ENCODE measurements at regions of chr12 and their contacts with region 1.

Region 1: DNA sequence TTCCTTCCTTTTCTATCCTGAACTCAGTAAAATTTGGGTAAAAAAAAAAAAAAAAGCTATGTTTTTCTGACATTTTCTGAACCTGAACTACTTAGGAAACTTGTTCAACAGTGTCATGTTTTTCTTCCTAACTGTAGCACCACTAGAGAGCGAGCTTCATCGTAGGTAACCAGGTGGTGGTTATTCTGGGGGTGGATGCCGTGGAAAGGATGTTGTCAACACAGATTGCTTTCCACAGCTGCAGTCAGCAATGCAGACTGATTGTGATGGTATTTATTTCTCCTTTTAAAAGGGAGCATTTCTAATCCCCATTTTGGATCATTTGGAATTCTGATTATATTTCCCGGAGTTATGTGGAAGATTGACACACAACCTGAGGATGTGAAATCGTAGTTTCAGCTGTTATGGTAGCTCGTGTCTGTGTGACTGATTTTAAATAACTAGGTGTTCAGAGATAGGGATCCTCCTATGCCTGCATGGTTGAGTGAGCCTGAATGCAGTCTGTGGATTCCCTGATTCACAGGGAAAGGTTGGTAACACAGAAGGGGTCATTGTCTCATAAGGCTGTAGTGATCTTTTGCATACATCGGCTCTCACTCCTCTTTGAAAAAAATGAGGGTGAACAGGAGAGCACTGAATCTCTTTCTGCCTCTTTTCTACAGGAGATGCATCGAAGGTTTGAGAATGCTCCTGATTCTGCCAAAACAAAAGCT is 113.2 kb downstream of the ERC1 start:
- DNase-seq: no peak
- H3K4me3 ChIP-seq: no peak overlapping the region
- H3K27ac ChIP-seq: no peak overlapping the region
- H3K4me1 ChIP-seq: no peaks in the 10 kb centered on the region
- H3K27me3 ChIP-seq: no peaks in the 10 kb centered on the region
- CTCF ChIP-seq: no peak

Region 2: GRCh38 chr12:1054117-1054870 is 50.0 kb before region 1 on chr12:
- CTCF ChIA-PET with region 1: no interaction called
- POLR2A ChIA-PET with region 1: interaction called, 12 read pairs
- intact Hi-C with region 1: no loop called
- DNase-seq: no peak
- H3K4me3 ChIP-seq: no peak overlapping the region
- H3K27ac ChIP-seq: no peak overlapping the region
- H3K4me1 ChIP-seq: no peaks in the 10 kb centered on the region
- H3K27me3 ChIP-seq: no peaks in the 10 kb centered on the region
- CTCF ChIP-seq: no peak